Left lung (tissue), 14 donors: ENCODE measurements at regions of chr17 and their contacts with region 1.

Region 1: DNA sequence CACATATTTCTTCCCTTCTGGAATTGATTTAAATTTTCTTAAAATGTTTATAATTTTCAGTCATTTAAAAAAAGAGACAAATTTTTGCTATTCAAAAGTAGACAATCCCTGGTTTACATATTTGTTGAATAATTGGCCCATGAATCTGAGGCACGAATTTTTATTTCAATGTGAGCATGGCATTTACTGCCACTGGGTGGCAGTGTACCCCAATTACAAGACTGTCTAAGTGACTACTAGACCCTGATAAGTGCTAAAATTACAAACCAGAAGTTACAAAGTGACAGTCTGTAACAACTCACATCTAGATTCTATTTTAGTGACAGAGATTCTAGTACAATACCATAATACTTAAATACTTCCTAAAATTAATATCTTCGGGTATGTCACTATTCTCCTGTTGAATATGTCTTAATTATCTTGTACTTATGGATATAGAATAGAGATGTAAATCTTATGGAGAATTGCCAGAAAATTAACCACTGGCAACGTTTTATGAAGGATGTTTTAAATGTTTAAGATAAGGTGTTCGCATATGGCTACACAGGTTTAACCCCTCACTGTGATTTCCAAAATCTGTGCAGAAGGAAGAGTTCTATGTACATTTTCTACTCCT is 235.8 kb downstream of the MAP2K4 start:
- DNase-seq: peak in 2 of 4 donors; percentile 69 to 83
- ATAC-seq: peak; percentile 79
- H3K4me3 ChIP-seq: no peak overlapping the region
- H3K27ac ChIP-seq: no peak overlapping the region
- H3K4me1 ChIP-seq: no peaks in the 10 kb centered on the region
- H3K27me3 ChIP-seq: no peaks in the 10 kb centered on the region
- CTCF ChIP-seq: peak; percentile 40 to 66

Region 2: DNA sequence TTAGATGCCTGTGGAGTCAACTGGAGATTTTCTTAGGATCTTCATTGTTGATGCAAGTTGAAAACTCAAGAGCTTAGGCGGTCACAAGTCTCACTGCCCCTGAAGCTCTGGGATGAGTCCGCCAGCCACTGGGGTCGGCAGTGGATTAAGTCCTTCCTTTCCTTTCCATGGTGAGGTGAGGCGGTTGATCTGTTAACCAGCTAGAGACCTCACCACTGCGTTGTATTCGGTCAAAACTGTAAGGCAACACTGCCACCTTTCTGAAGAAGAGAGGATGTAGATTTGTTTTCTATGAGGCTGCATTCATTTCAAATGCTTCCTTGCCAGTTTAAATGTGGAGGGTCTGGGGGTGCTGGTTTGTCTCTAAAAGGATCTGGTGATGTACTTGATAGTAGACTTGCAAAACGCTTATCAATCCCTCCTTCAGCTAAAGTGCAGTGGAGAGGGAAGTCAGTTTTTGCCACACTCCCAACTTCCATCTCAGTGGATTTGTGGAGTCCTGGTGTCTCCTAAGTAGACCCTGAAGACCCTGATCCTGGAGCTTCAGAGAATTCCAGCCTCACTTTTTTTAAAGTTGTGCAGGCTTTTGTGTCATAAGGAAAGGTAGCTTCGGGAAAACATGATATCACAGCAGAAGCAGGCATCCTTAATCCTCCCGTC is 410.9 kb after region 1 on chr17:
- intact Hi-C with region 1: loop called in 1 of 2 experiments (anchors 10 kb)
- DNase-seq: peak in 1 of 4 donors; percentile 62
- ATAC-seq: peak; percentile 64
- H3K4me3 ChIP-seq: no peak overlapping the region
- H3K27ac ChIP-seq: no peak overlapping the region
- H3K4me1 ChIP-seq: peaks cover 4 to 11% of the 10 kb centered on the region in 2 donors
- H3K27me3 ChIP-seq: peaks cover 34 to 57% of the 10 kb centered on the region in 2 donors
- CTCF ChIP-seq: no peak